Heart right ventricle (tissue), 16 donors: ENCODE measurements at regions of chr3 and their contacts with region 1.

Region 1: DNA sequence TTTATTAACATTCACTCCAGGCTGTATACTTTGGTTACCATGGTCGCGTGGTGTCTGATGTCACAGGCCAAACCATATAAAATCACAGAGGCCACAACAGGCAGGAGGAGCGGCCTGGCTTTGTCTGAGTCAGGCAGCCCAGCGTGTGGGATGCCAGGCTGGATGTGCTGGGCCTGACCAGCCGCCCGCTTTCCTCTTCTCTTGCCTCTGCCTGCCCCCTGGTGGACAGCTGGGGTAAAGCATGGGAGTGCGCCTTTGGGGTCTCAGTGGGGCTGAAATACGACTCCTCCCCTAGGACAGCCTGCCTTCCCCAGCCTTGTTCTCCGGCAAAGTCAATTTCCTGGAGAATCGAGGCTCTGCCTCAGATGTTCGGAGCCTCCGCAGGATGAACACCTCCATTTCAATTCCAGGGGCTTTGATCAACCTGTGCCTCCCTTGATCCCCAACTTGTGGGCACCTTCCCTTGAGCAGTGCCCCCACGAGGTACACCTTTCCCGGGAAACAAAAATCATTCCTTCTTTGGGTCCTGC is 78.2 kb downstream of the CCNL1 start:
- DNase-seq: peak; percentile 88 to 91
- ATAC-seq: peak; percentile 82 to 89 (median 85)
- H3K4me3 ChIP-seq: no peak overlapping the region
- H3K27ac ChIP-seq: peak overlapping the region in 4 of 10 donors; percentile 11 to 36 (median 26)
- H3K4me1 ChIP-seq: peaks cover 0 to 44% (median 22%) of the 10 kb centered on the region in 9 donors
- H3K27me3 ChIP-seq: no peaks in the 10 kb centered on the region
- CTCF ChIP-seq: peak in 8 of 9 donors; percentile 90 to 98 (median 96)

Region 2: DNA sequence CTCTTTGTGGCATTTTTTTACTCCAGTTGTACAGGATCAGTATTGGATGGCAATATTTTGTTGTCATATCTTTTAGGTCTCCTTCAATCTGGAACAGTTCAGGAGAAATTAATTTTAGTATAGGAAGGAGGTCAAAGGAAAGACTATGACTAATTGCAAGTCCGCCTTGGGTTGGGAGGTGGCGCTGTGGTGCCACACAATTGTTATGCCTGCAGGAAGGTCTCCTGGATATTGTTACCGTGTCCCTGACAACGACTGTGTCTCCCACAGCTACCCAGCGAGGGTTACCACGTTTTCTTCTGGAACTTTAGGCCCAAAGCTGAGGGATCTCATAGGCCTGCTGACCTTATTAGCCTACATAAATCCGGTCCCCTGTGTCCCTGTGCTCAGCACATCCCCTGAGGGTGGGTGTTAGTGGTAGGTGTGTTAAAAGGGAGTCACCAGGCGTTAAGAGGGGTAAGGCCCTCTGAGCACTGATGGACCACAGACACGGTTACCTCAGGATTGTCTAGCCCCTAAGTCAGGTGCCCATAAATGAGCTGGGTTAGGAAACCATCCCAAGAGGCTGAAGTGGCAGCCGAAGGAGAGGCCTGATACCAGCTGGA is 929.8 kb before region 1 on chr3:
- intact Hi-C with region 1: loop called in 9 of 10 experiments (anchors 2 to 10 kb)
- DNase-seq: peak; percentile 53 to 69
- ATAC-seq: peak; percentile 39 to 81 (median 76)
- H3K4me3 ChIP-seq: no peak overlapping the region
- H3K27ac ChIP-seq: peak overlapping the region in 1 of 10 donors; percentile 73
- H3K4me1 ChIP-seq: peaks cover 6 to 42% (median 26%) of the 10 kb centered on the region in 9 donors
- H3K27me3 ChIP-seq: no peaks in the 10 kb centered on the region
- CTCF ChIP-seq: peak; percentile 34 to 84 (median 78)

Region 3: DNA sequence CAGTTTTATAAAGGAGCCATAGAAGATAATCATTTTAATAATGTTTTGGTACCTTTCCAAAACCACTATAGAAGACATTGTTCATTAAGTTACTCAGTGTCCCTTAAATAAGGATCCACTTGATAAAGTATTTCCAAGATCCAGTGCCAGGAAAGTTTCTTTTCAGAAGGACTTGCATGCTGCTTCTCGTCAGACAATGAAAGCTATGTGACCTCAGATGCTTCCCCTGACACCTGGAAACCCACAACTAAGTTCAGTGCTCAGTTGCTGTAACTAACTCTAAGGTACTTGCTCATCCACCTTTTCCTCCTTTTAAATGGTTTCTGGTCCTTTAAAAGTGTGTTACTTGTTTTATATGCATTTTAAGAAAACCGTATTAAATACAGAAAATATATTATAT is 534.1 kb before region 1 on chr3:
- intact Hi-C with region 1: loop called in 7 of 10 experiments (anchors 2 to 10 kb)
- DNase-seq: no peak
- ATAC-seq: peak in 6 of 8 donors; percentile 57 to 78 (median 65)
- H3K4me3 ChIP-seq: no peak overlapping the region
- H3K27ac ChIP-seq: peak overlapping the region in 9 of 10 donors; percentile 38 to 91 (median 59)
- H3K4me1 ChIP-seq: peaks cover 5 to 99% (median 81%) of the 10 kb centered on the region in 9 donors
- H3K27me3 ChIP-seq: no peaks in the 10 kb centered on the region
- CTCF ChIP-seq: no peak

Region 4: GRCh38 chr3:156674046-156674910 is 407.5 kb before region 1 on chr3 and contains the start of gene TIPARP:
- intact Hi-C with region 1: loop called (anchors 1 to 5 kb)
- DNase-seq: peak; percentile 99 to 100
- ATAC-seq: peak; percentile 96 to 99 (median 97)
- H3K4me3 ChIP-seq: peak within 1 kb of the TSS; percentile 72 to 98 (median 92)
- H3K27ac ChIP-seq: peak within 1 kb of the TSS; percentile 93 to 98 (median 97)
- H3K4me1 ChIP-seq: peaks cover 0 to 52% (median 35%) of the 10 kb centered on the region in 9 donors
- H3K27me3 ChIP-seq: no peaks in the 10 kb centered on the region
- CTCF ChIP-seq: peak; percentile 50 to 85 (median 72)
- total RNA-seq, gene TIPARP: 19.8 to 74.6 (median 23.9) TPM

Region 5: GRCh38 chr3:156760333-156760732 is 321.4 kb before region 1 on chr3:
- intact Hi-C with region 1: no loop called
- DNase-seq: no peak
- ATAC-seq: no peak
- H3K4me3 ChIP-seq: no peak overlapping the region
- H3K27ac ChIP-seq: no peak overlapping the region
- H3K4me1 ChIP-seq: peaks cover 0 to 25% (median 10%) of the 10 kb centered on the region in 9 donors
- H3K27me3 ChIP-seq: no peaks in the 10 kb centered on the region
- CTCF ChIP-seq: no peak

Region 6: DNA sequence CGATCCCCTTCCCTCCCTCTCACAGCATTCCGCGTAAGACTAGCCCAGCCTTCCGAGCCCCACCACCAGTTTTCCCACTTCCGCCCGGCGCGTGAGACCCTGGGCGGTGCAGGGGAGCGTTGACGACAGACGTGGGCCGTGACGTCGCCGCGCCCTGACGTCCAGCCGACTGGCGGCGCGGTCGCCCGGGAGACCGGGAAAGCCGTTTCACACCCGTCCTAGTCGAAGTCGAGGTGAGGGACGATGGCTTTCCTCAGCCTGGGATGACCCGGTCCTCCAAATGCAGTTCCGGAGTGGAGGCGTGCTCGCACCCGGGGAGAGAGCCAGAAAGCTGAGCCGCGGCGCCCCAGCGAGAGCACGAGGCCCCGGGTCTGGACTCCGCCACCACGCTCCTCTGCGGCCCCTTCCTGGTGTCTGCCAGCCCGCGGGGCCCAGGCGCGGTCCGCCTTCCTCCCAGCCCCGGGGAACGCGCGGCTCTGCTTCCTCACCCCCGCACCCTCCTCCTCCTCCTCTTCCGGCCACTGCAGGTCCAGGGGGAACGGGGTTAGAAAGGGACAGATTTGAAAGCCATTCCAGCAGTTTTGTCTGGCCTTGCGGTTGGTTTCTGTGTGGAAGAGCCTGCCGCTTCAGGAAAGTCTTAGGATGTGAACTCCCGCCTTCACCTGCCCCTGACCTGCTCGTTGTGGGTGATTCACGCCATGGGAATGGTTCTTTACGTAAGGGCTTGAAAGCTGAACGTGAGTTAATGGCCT is 255.4 kb before region 1 on chr3 and contains the start of gene LEKR1:
- intact Hi-C with region 1: loop called in 5 of 10 experiments (anchors 5 to 10 kb)
- DNase-seq: peak; percentile 89 to 90
- ATAC-seq: peak; percentile 95 to 98 (median 97)
- H3K4me3 ChIP-seq: peak within 1 kb of the TSS; percentile 50 to 80 (median 71)
- H3K27ac ChIP-seq: peak within 1 kb of the TSS; percentile 85 to 95 (median 92)
- H3K4me1 ChIP-seq: peaks cover 0 to 13% (median 8%) of the 10 kb centered on the region in 9 donors
- H3K27me3 ChIP-seq: no peaks in the 10 kb centered on the region
- CTCF ChIP-seq: no peak
- total RNA-seq, gene LEKR1: 0.17 to 3.0 (median 0.92) TPM

Region 7: DNA sequence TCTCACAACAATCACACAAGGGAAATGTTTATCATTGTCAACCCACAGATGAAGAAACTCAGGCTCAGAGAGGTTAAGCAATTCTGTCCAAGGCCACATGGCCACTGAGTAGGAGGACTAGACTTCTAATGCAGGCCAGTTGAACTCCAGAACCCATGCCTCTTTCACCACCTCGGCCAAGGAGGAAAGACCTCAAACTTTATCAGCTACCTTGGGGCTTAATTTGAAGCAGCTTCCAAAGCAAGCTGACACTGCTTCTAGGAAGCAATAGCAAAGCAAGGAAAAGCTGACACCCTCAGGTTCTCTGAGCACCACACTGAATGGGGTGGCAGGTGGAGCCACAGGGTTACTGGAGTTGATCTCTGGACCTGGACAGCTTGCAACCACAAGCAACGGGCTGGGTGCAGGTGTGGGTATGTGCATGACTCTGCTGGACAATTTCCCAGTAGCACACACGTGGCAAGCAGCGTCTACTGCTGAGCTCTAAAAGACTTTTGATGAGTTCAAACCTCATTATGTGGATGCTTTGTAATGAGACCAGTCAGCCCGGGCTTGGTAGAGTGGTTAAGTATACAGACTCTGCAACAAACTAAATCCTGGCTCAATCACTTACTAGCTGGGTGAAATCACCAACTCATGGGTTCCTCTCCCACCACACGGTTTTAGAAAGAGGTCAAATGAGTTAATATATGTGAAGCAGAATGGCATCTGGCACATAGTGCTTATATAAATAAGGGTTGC is 55.1 kb after region 1 on chr3:
- intact Hi-C with region 1: loop called in 3 of 10 experiments (anchors 2 to 5 kb)
- DNase-seq: peak in 1 of 2 donors; percentile 20
- ATAC-seq: peak; percentile 18 to 49 (median 32)
- H3K4me3 ChIP-seq: peak overlapping the region in 1 of 10 donors; percentile 41
- H3K27ac ChIP-seq: peak overlapping the region; percentile 15 to 77 (median 58)
- H3K4me1 ChIP-seq: peaks cover 0 to 60% (median 39%) of the 10 kb centered on the region in 9 donors
- H3K27me3 ChIP-seq: no peaks in the 10 kb centered on the region
- CTCF ChIP-seq: no peak